ENCODE measurements at regions of chr2 and their contacts with region 1.

Region 1: DNA sequence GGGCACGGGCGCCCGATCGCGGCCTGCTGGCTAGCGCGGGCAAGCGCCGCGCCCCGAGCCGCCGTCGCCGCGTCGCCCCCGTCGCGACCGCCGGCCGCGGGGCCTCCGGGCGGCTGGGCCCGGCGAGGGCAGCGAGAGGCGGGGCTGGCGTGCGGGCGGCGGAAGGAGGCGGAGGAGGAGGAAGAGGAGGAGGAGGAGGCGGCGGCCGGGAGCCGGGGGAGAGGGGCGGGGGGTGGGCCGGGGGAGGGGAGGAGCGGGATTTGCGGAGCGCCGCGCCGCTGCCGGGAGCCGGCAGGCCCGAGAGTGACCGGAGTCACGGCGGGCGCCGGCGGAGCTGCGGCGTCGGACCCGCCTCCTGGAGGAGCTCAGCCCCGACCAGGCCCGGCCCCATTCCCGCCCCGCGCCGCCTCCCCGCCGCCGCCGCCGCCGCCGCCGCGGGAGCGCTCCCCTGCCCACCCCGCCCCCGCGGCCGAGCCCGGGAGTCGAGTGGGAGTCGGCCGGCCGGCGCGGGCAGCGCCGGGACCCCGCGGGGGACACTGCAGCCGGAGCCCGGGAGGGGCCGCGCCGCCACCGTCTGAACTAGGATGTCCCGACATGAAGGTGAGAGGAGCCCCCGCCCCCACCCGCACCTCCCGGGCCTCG is at the start of gene KCMF1:
- DNase-seq: peak; percentile 82
- ATAC-seq: peak; percentile 63
- H3K4me3 Mint-ChIP-seq: peak within 1 kb of the TSS; percentile 100
- H3K27ac Mint-ChIP-seq: peak within 1 kb of the TSS; percentile 100
- H3K4me1 Mint-ChIP-seq: peaks cover 48% of the 10 kb centered on the region
- H3K27me3 Mint-ChIP-seq: no peaks in the 10 kb centered on the region
- total RNA-seq, gene KCMF1: 78.2 to 89.0 TPM

Region 2: DNA sequence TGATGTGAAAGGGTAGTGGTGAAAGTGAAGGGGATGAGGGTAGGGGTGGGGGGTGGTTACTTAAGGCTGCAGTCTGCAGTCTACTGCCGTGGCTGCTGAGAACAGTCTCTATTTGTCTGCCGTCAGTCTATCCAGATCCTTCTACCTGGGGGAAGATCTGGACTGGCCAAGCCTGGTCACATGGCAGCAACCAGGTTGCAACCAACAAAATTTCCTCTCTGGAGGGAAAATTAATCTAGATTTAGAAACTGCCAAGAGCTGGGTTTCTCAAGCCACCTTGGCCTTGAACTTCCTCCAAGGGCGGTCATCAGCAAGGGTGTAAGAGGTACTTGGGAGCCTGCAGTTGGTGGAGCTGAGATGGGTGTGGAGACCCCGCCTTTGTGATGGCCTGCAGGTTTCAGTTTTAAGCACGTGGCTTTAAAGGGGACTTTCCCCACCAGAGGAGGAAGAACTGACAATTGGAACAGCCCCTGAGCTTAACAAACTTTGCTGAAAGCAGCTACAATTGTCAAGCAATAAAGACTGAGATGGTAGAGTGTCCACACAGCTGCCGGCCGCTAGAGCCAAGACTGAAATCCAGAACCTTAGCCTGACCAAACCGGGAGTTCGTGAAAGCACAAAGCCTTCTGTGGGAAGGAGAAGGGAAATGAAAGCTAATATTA is 31.4 kb before region 1 on chr2:
- CTCF ChIA-PET with region 1: interaction called, 26 read pairs
- DNase-seq: peak; percentile 95
- ATAC-seq: peak; percentile 87
- H3K4me3 Mint-ChIP-seq: peak overlapping the region; percentile 67
- H3K27ac Mint-ChIP-seq: peak overlapping the region; percentile 96
- H3K4me1 Mint-ChIP-seq: peaks cover 52% of the 10 kb centered on the region
- H3K27me3 Mint-ChIP-seq: no peaks in the 10 kb centered on the region

Region 3: DNA sequence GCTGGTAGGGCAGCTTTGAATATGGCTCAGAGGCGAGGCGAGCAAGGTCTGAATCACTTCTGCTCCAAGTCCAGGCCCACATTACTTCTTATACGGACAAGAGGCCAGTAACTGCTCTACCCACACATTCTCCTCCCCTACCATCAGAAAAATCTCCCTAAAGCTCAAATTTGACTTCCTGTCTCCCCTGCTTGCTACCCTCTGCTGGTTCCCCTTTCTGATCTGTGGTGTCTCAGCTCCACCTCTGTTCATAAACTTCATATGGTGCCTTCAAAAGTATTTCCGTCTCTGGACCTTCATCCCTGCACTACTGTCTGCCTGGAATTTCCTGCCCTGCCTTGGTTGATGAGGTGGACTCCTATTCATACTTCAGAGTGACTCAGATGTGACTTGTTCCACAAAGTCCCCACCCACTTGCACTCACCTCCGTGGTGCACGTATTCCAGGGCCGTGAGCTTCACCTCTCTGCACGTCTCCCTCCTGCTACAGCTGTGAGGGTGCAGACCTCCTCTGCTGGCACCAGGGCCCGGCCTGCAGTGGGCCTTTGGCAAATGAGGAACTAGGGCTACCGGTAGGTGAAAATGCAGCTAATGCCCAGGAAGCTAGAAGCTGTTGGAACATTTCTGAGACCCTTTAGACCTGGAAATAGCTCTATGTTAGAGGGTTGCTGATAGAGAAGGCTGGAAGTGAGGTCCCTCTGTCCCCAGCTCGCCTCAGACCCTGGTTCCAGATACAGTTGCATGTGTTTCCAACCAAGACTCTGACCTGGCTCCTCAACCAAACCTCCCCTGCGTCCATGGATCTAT is 24.6 kb before region 1 on chr2:
- CTCF ChIA-PET with region 1: interaction called, 26 read pairs
- DNase-seq: peak; percentile 82
- ATAC-seq: peak; percentile 94
- H3K4me3 Mint-ChIP-seq: peak overlapping the region; percentile 45
- H3K27ac Mint-ChIP-seq: peak overlapping the region; percentile 92
- H3K4me1 Mint-ChIP-seq: peaks cover 32% of the 10 kb centered on the region
- H3K27me3 Mint-ChIP-seq: no peaks in the 10 kb centered on the region

Region 4: GRCh38 chr2:84991404-84992151 is 20.6 kb after region 1 on chr2:
- CTCF ChIA-PET with region 1: no interaction called
- DNase-seq: no peak
- ATAC-seq: no peak
- H3K4me3 Mint-ChIP-seq: no peak overlapping the region
- H3K27ac Mint-ChIP-seq: no peak overlapping the region
- H3K4me1 Mint-ChIP-seq: peaks cover 27% of the 10 kb centered on the region
- H3K27me3 Mint-ChIP-seq: no peaks in the 10 kb centered on the region